ENCODE measurements at regions of chr17 and their contacts with region 1.

Region 1: GRCh38 chr17:79393358-79394202 is 217.3 kb downstream of the RBFOX3 start:
- DNase-seq: peak; percentile 62
- H3K4me3 Mint-ChIP-seq: no peak overlapping the region
- H3K27ac Mint-ChIP-seq: no peak overlapping the region
- H3K4me1 Mint-ChIP-seq: no peaks in the 10 kb centered on the region
- H3K27me3 Mint-ChIP-seq: peaks cover 13% of the 10 kb centered on the region

Region 2: DNA sequence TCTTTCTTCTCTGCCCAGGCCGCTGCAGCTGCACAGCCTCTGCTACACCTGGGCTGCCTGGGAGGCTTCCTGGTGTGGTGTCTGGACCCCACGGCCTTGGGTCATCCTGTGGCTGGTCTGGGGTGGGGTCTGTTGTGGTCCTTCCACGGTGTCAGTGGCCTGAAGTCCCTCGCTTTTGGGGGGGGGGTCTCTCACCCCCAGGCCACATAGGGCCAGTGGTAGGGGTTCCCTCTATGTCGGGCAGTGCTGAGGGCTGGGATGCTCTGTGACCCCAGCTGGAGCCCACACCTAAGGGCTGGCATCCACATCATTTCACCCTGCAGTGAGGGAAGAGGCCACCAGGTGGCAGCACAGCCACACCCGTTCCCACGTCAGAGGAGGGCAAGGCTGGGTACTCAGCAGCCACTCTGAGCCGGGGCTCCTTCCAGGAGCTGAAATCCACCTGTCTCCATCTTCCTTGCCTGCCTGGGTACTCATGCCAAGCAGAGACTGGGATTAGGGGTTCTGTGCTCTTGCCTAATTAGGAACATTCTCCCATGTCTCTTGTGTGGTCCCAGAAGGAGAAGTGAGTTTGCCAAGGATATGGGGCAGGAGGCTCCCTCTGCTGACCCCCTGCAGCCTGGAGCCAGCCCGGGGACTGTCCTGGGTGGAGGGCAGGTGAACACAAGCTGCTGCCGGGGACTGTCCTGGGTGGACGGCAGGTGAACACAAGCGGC is 306.0 kb before region 1 on chr17:
- CTCF ChIA-PET with region 1: interaction called, 17 read pairs
- POLR2A ChIA-PET with region 1: no interaction called
- DNase-seq: peak; percentile 75
- H3K4me3 Mint-ChIP-seq: no peak overlapping the region
- H3K27ac Mint-ChIP-seq: no peak overlapping the region
- H3K4me1 Mint-ChIP-seq: peaks cover 4% of the 10 kb centered on the region
- H3K27me3 Mint-ChIP-seq: peaks cover 2% of the 10 kb centered on the region

Measured in activated CD4-positive, alpha-beta T cell treated with anti-CD3 and anti-CD28 coated beads, Interleukin-2, amount 10 ng/mL, durations not matched to agents 7 days and 5 days (primary cell).